ENCODE measurements at regions of chr2 and their contacts with region 1.

Region 1: GRCh38 chr2:24409700-24410556 is 49.6 kb upstream of the ITSN2 start:
- DNase-seq: no peak

Region 2: GRCh38 chr2:24399434-24400206 is 10.3 kb before region 1 on chr2:
- intact Hi-C with region 1: no loop called
- DNase-seq: no peak

Region 3: DNA sequence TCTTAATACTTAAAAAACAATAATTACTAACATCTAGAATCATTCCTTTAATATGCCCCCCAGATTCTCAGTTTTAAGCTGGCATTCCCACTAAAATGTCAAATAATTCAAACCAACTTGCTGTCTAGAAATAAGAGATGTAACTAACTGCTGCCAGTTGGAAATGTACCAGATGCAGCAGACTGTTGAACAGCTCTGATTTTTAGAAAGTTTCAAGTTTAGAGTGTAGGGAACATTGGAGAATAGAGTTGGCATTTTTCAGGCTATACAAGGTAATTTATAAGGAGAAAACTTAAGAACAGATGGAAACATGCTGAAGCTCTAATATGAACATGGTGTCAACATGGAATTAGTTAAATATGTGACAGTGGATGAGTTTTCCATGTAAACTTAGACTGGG is 281.9 kb after region 1 on chr2:
- intact Hi-C with region 1: loop called in 1 of 2 experiments (anchors 10 kb)
- DNase-seq: no peak

Region 4: GRCh38 chr2:24816884-24817283 is 407.0 kb after region 1 on chr2:
- intact Hi-C with region 1: no loop called
- DNase-seq: no peak

Region 5: DNA sequence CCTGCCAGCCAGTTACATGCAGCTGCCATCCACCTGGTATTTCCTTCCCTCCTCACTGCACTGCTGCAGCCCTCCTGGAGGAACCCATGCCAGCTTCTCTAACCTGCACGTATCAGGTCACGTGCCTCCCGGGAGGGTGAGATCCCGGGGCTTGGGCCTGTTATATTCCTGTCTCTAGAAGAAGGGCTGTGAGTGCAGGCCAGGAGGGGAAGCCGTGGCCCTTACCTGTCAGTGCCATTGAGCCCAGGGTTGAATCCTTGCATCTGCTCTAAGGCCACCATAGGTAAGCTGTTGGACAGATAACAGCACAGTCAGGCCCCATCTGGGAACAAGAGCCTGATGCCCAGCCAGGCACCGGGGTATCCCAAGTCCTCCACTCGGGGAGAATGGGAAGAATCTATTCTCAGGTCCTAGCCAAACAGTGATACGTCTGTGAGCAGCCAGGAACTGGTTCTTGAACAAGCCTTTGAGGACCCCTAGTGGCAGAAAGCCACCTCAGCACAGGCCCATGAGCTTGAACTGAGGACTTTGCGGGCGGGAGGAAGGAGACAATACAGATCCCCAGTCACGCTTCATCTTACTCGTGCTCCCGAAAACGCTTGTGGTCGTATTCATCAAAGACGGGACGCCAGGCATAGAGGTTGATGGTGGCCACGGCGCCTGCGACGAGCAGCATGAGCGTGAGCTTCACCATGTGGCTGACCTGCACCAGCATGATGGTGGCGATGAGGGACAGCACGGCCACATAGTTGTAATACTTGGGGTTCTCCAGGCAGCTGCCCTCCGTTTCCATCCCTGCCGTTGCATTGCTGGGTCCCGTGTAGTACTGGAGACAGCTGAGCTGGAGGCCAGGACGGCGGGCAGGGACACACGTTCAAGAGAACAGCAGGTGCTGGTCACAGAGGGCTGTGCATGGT is 417.7 kb after region 1 on chr2:
- intact Hi-C with region 1: loop called (anchors 5 kb)
- DNase-seq: peak; percentile 90